ENCODE measurements at regions of chr5 and their contacts with region 1.

Region 1: GRCh38 chr5:115544436-115545350 is at the start of gene FEM1C:
- DNase-seq: peak; percentile 97 to 99
- ATAC-seq: peak; percentile 97 to 99 (median 98)
- H3K4me3 ChIP-seq: peak within 1 kb of the TSS; percentile 74 to 96 (median 90)
- H3K27ac ChIP-seq: peak within 1 kb of the TSS; percentile 93 to 99 (median 98)
- H3K4me1 ChIP-seq: peaks cover 0 to 43% (median 32%) of the 10 kb centered on the region in 9 donors
- H3K27me3 ChIP-seq: no peaks in the 10 kb centered on the region
- CTCF ChIP-seq: peak in 1 of 9 donors; percentile 3
- total RNA-seq, gene FEM1C: 40.2 to 72.2 (median 57.5) TPM

Region 2: DNA sequence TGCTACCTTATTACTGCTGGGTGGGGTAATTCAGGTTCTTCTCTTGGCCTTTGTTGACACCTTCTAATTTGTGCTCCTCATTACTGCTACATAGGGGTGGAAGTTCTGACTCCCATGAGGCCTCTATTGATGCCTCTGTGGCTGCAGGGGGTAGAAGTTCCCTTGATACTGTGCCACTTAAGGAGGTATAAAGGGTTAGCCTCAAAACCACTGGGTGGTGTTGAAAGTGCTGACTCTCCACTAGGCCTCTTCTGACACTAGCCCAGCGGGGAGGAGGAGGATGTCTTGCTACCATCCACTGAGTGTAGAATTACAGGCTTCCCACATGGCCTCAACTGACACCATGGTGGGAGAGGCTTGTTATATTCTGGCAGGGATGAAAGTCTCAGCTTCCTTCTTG is 211.5 kb before region 1 on chr5:
- intact Hi-C with region 1: no loop called
- DNase-seq: no peak
- ATAC-seq: no peak
- H3K4me3 ChIP-seq: no peak overlapping the region
- H3K27ac ChIP-seq: no peak overlapping the region
- H3K4me1 ChIP-seq: no peaks in the 10 kb centered on the region
- H3K27me3 ChIP-seq: no peaks in the 10 kb centered on the region
- CTCF ChIP-seq: no peak

Region 3: DNA sequence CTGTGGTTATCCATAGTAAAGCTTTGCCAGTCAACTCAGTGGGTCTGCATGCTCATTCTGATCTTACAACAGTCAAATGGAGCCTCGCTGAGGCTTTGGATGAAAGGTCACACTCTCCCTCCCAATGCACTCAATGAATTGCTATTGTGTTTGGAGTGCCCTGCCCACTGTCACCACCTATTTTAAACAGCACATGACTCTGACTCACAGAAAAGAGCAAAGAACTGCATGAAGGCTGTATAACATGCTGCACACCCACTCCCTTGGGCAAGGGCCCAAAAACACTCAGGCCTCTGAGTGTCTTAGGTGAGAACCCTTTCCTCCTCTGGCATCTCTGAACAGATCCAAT is 129.6 kb before region 1 on chr5:
- intact Hi-C with region 1: loop called in 2 of 10 experiments (anchors 5 kb)
- DNase-seq: peak in 1 of 2 donors; percentile 36
- ATAC-seq: peak in 7 of 8 donors; percentile 29 to 88 (median 82)
- H3K4me3 ChIP-seq: no peak overlapping the region
- H3K27ac ChIP-seq: peak overlapping the region in 2 of 10 donors; percentile 23 to 46
- H3K4me1 ChIP-seq: peaks cover 5 to 51% (median 24%) of the 10 kb centered on the region in 9 donors
- H3K27me3 ChIP-seq: no peaks in the 10 kb centered on the region
- CTCF ChIP-seq: no peak

Region 4: DNA sequence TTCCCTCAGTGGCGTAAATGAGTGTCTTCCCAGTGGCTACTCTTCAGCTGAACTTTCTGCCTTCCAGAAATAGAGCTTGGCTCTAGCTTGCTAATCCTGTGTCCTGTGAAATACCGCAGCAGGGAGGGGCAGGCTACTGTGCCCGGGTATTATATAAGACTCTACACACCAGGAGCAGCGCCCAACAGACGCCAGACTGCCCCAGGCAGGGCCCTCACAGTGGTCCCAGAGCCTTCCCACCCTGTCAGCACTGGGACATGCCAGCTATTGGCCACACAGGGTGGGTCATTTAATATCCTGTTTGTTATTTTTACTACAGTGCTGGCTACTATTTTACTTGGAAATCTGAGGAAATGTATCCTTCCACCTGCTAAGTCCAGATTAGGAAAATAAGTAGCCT is 121.2 kb before region 1 on chr5:
- intact Hi-C with region 1: loop called in 5 of 10 experiments (anchors 1 to 5 kb)
- DNase-seq: peak; percentile 64 to 86
- ATAC-seq: peak; percentile 93 to 98 (median 96)
- H3K4me3 ChIP-seq: peak overlapping the region in 6 of 10 donors; percentile 9 to 26 (median 20)
- H3K27ac ChIP-seq: peak overlapping the region; percentile 74 to 92 (median 90)
- H3K4me1 ChIP-seq: peaks cover 27 to 73% (median 47%) of the 10 kb centered on the region in 9 donors
- H3K27me3 ChIP-seq: no peaks in the 10 kb centered on the region
- CTCF ChIP-seq: no peak

Region 5: DNA sequence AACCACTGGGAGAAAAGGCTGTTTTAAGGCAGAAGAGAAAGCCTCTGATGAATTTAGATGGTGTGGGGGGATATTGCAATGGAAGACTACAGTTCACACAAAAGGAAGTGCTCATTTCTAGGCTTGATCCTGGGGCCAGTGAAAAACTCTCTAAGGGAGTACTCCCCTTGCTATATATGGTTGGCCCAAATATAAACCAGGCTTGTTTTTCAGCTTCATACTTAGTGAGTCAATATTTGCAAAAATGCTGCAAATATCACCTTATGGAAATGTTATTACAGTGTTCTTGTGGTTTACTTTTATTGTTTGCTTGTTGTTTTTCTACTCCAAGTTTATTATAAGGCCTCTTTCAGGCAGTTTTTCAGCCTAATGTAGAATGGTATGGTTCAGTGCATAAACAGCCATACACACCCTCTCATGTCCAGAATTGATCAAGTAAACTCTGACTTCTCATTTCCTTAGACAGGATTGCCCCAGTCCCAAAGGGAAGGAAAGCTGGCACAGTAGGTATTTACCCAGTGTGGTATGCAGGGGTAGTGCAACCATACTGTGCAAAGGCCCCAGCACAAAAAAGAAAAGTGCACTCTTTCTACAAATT is 115.3 kb before region 1 on chr5:
- intact Hi-C with region 1: loop called in 4 of 10 experiments (anchors 1 to 5 kb)
- DNase-seq: no peak
- ATAC-seq: no peak
- H3K4me3 ChIP-seq: no peak overlapping the region
- H3K27ac ChIP-seq: no peak overlapping the region
- H3K4me1 ChIP-seq: peaks cover 3 to 41% (median 15%) of the 10 kb centered on the region in 9 donors
- H3K27me3 ChIP-seq: no peaks in the 10 kb centered on the region
- CTCF ChIP-seq: no peak

Region 6: GRCh38 chr5:115460472-115460871 is 84.2 kb before region 1 on chr5:
- intact Hi-C with region 1: loop called in 3 of 10 experiments (anchors 5 to 10 kb)
- DNase-seq: peak; percentile 78 to 81
- ATAC-seq: peak; percentile 78 to 93 (median 91)
- H3K4me3 ChIP-seq: no peak overlapping the region
- H3K27ac ChIP-seq: peak overlapping the region; percentile 58 to 86 (median 74)
- H3K4me1 ChIP-seq: peaks cover 0 to 68% (median 46%) of the 10 kb centered on the region in 9 donors
- H3K27me3 ChIP-seq: no peaks in the 10 kb centered on the region
- CTCF ChIP-seq: no peak

Region 7: DNA sequence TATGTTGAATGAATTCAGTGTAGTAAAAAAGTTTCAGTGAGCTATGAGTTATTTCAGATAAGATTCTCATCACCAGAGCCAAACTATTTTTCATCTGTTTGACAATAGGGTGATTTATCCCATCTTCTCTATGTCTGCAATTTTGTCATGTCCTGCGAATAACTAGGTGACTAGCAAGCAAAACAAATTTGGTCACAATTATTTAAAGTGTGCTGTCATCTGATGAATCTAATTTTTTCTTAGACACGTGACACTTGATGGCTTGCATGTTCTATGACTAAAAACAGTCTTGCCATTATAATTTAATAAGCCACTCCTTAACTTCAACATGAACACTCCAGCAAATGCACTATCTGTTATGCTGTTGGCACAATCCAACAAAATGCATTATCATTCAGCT is 35.1 kb before region 1 on chr5:
- intact Hi-C with region 1: loop called in 1 of 10 experiments (anchors 1 kb)
- DNase-seq: no peak
- ATAC-seq: no peak
- H3K4me3 ChIP-seq: no peak overlapping the region
- H3K27ac ChIP-seq: no peak overlapping the region
- H3K4me1 ChIP-seq: peaks cover 0 to 22% (median 0%) of the 10 kb centered on the region in 9 donors
- H3K27me3 ChIP-seq: no peaks in the 10 kb centered on the region
- CTCF ChIP-seq: no peak

Region 8: DNA sequence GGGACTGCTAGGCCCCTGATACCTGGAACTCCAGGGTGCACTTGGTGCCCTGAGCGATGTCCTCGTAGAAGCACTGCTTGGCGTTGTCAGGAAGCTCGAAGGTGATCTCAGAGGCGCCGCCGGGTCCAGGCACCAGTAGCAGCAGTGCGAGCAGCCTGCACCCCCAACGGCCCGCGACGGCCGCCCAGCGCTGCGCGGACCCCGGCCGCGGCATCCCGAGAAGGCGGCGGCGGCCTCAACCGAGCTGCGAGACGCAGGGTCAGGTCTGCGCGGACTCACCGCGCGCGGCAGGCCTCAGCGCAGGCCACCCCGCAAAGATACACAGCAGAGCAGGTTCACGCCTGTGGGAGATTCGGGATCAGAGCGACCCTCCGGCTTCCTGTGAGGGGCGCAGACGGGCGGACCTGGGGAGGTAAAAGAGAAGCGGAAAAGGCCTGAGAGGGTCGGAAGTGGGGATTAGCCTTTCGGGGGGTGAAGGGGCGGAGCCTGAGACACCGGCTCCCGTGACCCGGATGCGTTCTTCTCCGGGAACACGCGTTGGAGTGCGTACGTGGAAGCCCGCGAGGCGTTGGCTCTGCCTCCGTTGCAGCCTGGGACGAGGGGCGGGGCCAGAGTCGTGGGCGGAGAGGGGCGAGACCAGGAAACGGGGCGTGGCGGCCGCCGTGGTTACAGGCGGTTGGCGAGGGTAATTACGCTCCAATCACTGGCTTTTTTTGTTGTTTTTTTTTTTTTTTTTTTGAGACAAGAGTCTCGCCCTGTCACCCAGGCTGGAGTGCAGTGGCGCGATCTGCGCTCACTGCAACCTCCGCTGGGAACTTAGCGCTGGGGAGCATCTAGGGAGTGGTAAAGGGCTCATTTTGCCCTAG is 81.1 kb after region 1 on chr5 and contains the start of gene TMED7:
- intact Hi-C with region 1: loop called in 1 of 10 experiments (anchors 10 kb)
- DNase-seq: peak; percentile 100
- ATAC-seq: peak; percentile 99
- H3K4me3 ChIP-seq: peak within 1 kb of the TSS; percentile 48 to 100 (median 90)
- H3K27ac ChIP-seq: peak within 1 kb of the TSS; percentile 31 to 99 (median 96)
- H3K4me1 ChIP-seq: peaks cover 0 to 51% (median 44%) of the 10 kb centered on the region in 9 donors
- H3K27me3 ChIP-seq: no peaks in the 10 kb centered on the region
- CTCF ChIP-seq: peak in 1 of 9 donors; percentile 18
- total RNA-seq, gene TMED7: 73.4 to 100 (median 85.9) TPM